ENCODE measurements at regions of chr1 and their contacts with region 1.

Region 1: GRCh38 chr1:209769171-209769904 is 13.5 kb downstream of the TRAF3IP3 start:
- DNase-seq: peak; percentile 88
- ATAC-seq: peak; percentile 67
- H3K4me3 Mint-ChIP-seq: no peak overlapping the region
- H3K27ac Mint-ChIP-seq: no peak overlapping the region
- H3K4me1 Mint-ChIP-seq: peaks cover 48% of the 10 kb centered on the region
- H3K27me3 Mint-ChIP-seq: no peaks in the 10 kb centered on the region

Region 2: DNA sequence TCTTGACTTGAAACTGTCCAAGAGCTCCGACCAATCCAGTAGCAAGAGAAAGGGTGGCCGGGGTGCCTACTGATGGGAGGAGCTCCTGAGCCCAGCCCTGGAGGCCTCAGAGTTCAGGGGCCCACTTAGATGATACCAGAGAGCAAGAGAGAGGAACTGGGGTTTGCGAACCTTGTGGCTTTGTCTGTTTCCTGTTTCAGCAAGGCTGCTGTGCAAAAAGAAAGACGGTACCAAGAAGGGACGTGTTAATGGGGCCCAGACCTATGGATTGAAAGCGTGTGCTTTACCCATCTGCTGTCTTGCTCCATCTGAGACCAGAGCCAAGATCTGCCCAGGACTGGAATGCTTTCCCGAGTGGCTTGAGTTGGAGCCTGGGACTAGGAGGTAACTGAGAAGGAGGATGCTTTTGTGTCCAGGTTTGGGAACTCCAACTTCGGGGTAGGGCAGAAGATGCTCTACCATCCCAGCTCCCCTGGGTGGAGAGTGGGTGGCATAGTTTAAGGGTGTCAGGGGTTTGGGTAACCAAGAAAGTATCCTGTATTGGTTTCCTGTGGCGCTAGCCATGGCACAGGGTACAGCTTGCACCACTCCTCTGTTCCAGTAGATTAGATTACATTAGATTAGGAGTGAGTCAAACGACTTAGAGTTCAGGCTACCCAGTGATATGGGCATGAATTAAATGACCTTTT is 13.3 kb before region 1 on chr1 and contains the start of gene TRAF3IP3:
- CTCF ChIA-PET with region 1: interaction called, 75 read pairs
- POLR2A ChIA-PET with region 1: interaction called, 28 read pairs
- intact Hi-C with region 1: loop called (anchors 1 kb)
- DNase-seq: peak; percentile 89
- ATAC-seq: peak; percentile 76
- H3K4me3 Mint-ChIP-seq: peak within 1 kb of the TSS; percentile 95
- H3K27ac Mint-ChIP-seq: peak within 1 kb of the TSS; percentile 99
- H3K4me1 Mint-ChIP-seq: peaks cover 75% of the 10 kb centered on the region
- H3K27me3 Mint-ChIP-seq: no peaks in the 10 kb centered on the region
- total RNA-seq, gene TRAF3IP3: 136 to 138 TPM

Region 3: DNA sequence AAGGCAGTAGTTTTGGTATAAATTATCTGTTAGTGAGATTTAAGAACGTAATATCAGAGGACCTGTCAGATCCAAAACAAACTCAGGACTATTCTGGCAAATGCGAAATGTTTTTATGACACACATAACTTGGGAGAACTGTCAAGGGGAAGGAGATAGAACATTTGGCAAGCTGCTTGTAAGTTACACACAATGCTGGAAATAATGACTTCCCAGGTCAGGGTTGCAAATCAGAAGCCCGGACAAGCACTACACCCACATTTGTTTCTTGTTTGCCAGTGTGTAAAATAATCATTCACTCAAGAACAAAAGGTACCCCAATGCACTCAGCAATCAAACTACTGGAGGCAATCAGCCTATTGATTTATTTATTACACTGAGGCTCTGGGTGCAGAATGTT is 1009.9 kb after region 1 on chr1:
- CTCF ChIA-PET with region 1: no interaction called
- POLR2A ChIA-PET with region 1: no interaction called
- intact Hi-C with region 1: no loop called
- DNase-seq: no peak
- ATAC-seq: no peak
- H3K4me3 Mint-ChIP-seq: no peak overlapping the region
- H3K27ac Mint-ChIP-seq: no peak overlapping the region
- H3K4me1 Mint-ChIP-seq: no peaks in the 10 kb centered on the region
- H3K27me3 Mint-ChIP-seq: peaks cover 8% of the 10 kb centered on the region